ENCODE measurements at regions of chr7 and their contacts with region 1.

Region 1: DNA sequence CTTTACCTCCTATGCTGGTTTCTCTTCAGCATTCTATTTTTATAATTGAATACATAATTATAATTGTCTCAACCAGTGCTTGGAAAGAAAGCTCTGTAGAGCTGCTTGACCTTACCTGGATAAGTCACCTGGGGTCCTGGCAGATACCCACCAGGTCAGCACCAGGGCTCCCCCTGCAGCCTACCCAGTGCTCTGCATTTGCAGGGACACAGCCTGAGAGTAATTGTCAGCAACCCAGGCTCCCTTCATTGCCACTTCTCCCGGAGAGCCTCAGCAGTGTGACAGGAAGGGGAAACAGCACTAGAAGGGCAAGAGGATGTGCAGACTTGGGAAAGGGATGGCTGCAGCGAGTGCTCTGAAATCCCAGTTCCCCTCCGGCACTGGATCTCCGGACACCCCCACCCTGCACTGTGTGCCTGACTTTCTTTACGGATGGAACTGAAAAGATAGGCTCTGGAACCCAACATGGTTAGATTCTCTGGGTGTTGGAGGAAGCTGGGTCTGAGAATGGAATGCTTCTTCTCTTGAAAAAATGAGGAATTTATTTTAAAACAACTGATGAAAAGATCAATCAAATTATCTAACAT is 11.4 kb upstream of the PAX4 start:
- DNase-seq: peak; percentile 74 to 82
- H3K4me3 ChIP-seq: no peak overlapping the region
- H3K4me3 Mint-ChIP-seq: no peak overlapping the region
- H3K27ac Mint-ChIP-seq: no peak overlapping the region
- H3K4me1 ChIP-seq: no peaks in the 10 kb centered on the region
- H3K4me1 Mint-ChIP-seq: no peaks in the 10 kb centered on the region
- H3K27me3 ChIP-seq: no peaks in the 10 kb centered on the region
- H3K27me3 Mint-ChIP-seq: peaks cover 8% of the 10 kb centered on the region
- CTCF ChIP-seq: peak; percentile 68 to 82

Region 2: GRCh38 chr7:127504715-127505114 is 124.6 kb before region 1 on chr7:
- CTCF ChIA-PET with region 1: interaction called, 3 read pairs
- POLR2A ChIA-PET with region 1: no interaction called
- intact Hi-C with region 1: loop called (anchors 2 kb)
- DNase-seq: peak in 1 of 2 experiments; percentile 53
- H3K4me3 ChIP-seq: no peak overlapping the region
- H3K4me3 Mint-ChIP-seq: no peak overlapping the region
- H3K27ac Mint-ChIP-seq: no peak overlapping the region
- H3K4me1 ChIP-seq: no peaks in the 10 kb centered on the region
- H3K4me1 Mint-ChIP-seq: peaks cover 5% of the 10 kb centered on the region
- H3K27me3 ChIP-seq: no peaks in the 10 kb centered on the region
- H3K27me3 Mint-ChIP-seq: peaks cover 13% of the 10 kb centered on the region
- CTCF ChIP-seq: peak; percentile 54 to 60

Region 3: DNA sequence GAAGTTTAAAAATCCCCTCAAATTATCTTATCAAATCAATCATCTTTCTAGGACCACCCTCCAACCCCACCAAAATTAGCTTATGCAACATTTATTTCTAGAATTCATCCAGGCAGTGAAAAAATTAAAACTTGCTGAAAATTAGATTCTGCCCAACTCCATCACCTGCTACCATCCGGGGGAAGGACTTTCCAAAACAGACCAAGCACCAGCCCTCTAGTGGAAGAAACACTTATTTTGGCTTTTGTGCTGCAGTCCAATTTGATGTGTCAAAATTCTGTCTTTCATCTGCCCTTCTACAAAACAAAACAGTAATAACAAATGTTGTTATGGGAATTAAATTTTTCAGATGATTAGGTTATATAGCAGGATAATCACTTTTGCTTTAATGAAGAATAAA is 79.1 kb before region 1 on chr7:
- CTCF ChIA-PET with region 1: no interaction called
- POLR2A ChIA-PET with region 1: no interaction called
- intact Hi-C with region 1: no loop called
- DNase-seq: no peak
- H3K4me3 ChIP-seq: no peak overlapping the region
- H3K4me3 Mint-ChIP-seq: no peak overlapping the region
- H3K27ac Mint-ChIP-seq: no peak overlapping the region
- H3K4me1 ChIP-seq: no peaks in the 10 kb centered on the region
- H3K4me1 Mint-ChIP-seq: no peaks in the 10 kb centered on the region
- H3K27me3 ChIP-seq: no peaks in the 10 kb centered on the region
- H3K27me3 Mint-ChIP-seq: no peaks in the 10 kb centered on the region
- CTCF ChIP-seq: peak in 1 of 2 experiments; percentile 20

Region 4: DNA sequence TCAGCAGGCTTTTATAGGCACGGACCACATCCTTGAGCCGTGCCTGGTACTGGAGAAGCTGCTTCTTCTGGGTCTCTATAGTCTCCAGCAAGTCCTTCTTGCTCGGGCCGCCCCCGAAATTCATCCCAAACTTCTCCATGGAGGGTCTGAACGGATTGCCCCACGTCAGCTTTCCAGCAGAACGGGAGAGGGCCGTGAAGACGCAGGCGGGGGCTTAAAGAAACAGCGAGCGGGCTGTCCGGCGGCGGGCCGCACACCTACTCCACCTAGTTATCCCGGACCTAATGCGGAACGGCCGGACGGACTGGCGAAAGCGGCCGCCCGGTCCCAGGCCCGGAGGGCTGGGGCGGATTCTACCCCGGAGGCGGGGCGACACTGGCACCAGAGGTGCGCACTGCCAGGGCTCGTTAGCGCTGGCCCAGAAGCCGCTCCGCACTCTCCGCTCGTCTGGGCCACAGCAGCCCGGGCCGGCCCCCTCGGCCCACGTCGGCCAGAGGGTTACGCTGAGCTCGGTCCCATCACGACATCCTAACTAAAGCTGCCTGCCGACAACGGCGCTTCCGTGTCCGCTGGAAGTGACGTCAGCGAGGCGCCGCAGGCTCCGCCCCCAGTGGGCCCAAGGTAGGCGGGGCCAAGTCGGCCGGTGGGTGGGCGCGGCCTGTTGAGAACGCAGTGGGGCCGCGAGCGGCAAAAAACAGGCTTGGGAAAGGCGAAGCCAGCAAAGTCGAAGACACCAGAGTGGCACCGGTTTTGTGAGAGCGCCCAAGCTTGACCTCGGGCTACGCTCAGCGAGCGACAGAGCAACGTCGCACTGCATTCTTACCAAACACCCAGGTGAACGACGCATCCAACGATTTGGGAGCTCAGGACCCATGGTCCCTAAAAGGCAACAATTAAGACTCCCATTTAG is 44.1 kb before region 1 on chr7 and contains the start of gene GCC1:
- CTCF ChIA-PET with region 1: interaction called, 8 read pairs
- POLR2A ChIA-PET with region 1: interaction called, 5 read pairs
- intact Hi-C with region 1: loop called (anchors 1 kb)
- DNase-seq: peak; percentile 91 to 96
- H3K4me3 ChIP-seq: peak within 1 kb of the TSS; percentile 94
- H3K4me3 Mint-ChIP-seq: peak within 1 kb of the TSS; percentile 83
- H3K27ac Mint-ChIP-seq: peak within 1 kb of the TSS; percentile 87
- H3K4me1 ChIP-seq: peaks cover 30% of the 10 kb centered on the region
- H3K4me1 Mint-ChIP-seq: peaks cover 34% of the 10 kb centered on the region
- H3K27me3 ChIP-seq: no peaks in the 10 kb centered on the region
- H3K27me3 Mint-ChIP-seq: no peaks in the 10 kb centered on the region
- CTCF ChIP-seq: no peak
- total RNA-seq, gene GCC1: 23.0 and 26.6 TPM in 2 replicates

Region 5: GRCh38 chr7:127598318-127598717 is 31.0 kb before region 1 on chr7:
- CTCF ChIA-PET with region 1: no interaction called
- POLR2A ChIA-PET with region 1: no interaction called
- intact Hi-C with region 1: loop called (anchors 2 kb)
- DNase-seq: peak in 1 of 2 experiments; percentile 49
- H3K4me3 ChIP-seq: no peak overlapping the region
- H3K4me3 Mint-ChIP-seq: no peak overlapping the region
- H3K27ac Mint-ChIP-seq: no peak overlapping the region
- H3K4me1 ChIP-seq: no peaks in the 10 kb centered on the region
- H3K4me1 Mint-ChIP-seq: no peaks in the 10 kb centered on the region
- H3K27me3 ChIP-seq: no peaks in the 10 kb centered on the region
- H3K27me3 Mint-ChIP-seq: peaks cover 10% of the 10 kb centered on the region
- CTCF ChIP-seq: peak; percentile 33 to 47

Region 6: DNA sequence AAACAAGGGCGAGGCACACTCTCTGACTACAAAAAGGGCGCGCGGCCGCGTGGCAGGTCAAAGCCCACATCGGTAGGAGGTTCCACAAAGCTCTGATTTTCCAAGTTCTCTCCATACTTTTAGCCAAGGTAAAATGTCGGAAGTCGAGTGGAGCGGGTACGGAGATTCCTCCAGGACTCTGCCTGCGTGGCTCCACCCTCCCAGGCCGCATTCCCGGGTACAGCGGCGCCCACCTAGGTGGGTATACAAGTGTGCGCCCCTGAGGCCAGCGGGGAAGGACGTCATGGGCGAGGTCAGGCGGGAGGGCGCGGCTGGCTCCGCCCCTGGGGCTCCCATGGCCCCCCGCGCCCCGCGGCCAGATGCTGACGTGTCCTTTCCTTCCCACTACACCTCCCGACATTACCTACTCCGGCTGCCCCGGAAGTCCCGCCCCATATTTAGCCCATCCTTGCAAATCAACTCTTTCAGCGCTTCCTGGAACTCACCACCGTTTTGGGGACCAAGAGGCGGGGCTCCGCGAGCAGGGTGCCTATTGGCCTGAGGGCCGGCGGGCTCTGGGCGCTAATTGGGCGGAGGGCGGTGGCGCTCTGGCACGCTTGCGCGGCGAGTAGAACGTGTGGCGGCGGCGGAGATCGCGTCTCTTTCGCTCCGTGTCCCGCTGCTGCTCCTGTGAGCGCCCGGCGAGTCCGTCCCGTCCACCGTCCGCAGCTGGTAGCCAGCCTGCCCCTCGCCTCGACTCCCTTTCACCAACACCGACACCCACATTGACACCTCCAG is 22.4 kb after region 1 on chr7 and contains the start of gene SND1:
- CTCF ChIA-PET with region 1: interaction called, 3 read pairs
- POLR2A ChIA-PET with region 1: no interaction called
- intact Hi-C with region 1: loop called (anchors 2 kb)
- DNase-seq: peak; percentile 100
- H3K4me3 ChIP-seq: peak within 1 kb of the TSS; percentile 98
- H3K4me3 Mint-ChIP-seq: no peak within 1 kb of the TSS
- H3K27ac Mint-ChIP-seq: no peak within 1 kb of the TSS
- H3K4me1 ChIP-seq: peaks cover 13% of the 10 kb centered on the region
- H3K4me1 Mint-ChIP-seq: peaks cover 18% of the 10 kb centered on the region
- H3K27me3 ChIP-seq: no peaks in the 10 kb centered on the region
- H3K27me3 Mint-ChIP-seq: no peaks in the 10 kb centered on the region
- CTCF ChIP-seq: no peak
- total RNA-seq, gene SND1: 274 and 276 TPM in 2 replicates

Measured in Caco-2 (cell line).